ENCODE measurements at regions of chr15 and their contacts with region 1.

Region 1: DNA sequence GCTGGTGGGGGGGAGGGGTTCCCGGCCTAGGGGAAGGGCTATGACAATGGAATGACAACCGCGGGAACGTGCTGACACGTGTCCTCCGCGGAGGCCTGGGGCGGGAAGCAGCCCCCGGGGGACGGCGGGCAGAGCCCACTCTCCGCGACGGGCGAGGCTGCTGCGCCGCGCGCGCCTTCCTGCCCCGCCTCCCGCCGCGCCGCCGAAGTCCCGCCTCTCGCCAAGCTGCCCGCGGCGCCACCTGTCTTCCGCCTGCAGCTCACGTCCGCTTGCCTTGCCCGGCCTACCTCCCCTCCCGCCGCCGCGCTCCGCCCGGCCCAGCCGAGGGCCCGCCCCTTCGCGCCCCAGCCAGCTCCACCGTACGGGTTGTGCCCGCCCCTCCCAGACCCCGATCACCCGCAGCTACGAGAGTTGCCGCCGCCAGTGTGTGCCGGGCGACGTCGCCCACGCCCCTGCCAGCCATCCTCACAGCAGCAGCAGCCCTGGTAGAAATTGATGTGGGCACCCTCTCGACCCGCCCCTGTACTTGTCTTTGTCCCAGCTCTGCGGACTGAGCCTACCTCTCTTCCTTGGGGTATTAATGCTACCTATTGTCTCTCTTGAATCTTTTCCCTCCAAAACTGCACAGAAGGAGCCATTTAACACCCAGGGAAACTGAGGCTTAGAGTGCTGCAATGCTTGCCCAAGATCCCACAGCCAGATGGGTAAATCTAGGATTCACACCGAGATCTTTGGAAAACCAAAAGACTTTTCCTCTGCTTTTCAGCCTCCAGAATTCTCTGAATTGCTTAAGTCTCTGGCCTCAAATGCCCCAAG is at the start of gene PARP16:
- DNase-seq: peak; percentile 81
- H3K4me3 Mint-ChIP-seq: peak within 1 kb of the TSS; percentile 79
- H3K27ac Mint-ChIP-seq: peak within 1 kb of the TSS; percentile 39
- H3K4me1 Mint-ChIP-seq: peaks cover 4% of the 10 kb centered on the region
- H3K27me3 Mint-ChIP-seq: no peaks in the 10 kb centered on the region
- CTCF ChIP-seq: peak; percentile 22
- total RNA-seq, gene PARP16: 5.9 and 6.1 TPM in 2 replicates

Region 2: GRCh38 chr15:64930778-64931371 is 356.0 kb before region 1 on chr15:
- CTCF ChIA-PET with region 1: no interaction called
- POLR2A ChIA-PET with region 1: no interaction called
- intact Hi-C with region 1: no loop called
- DNase-seq: no peak
- H3K4me3 Mint-ChIP-seq: no peak overlapping the region
- H3K27ac Mint-ChIP-seq: no peak overlapping the region
- H3K4me1 Mint-ChIP-seq: peaks cover 6% of the 10 kb centered on the region
- H3K27me3 Mint-ChIP-seq: no peaks in the 10 kb centered on the region
- CTCF ChIP-seq: no peak

Region 3: DNA sequence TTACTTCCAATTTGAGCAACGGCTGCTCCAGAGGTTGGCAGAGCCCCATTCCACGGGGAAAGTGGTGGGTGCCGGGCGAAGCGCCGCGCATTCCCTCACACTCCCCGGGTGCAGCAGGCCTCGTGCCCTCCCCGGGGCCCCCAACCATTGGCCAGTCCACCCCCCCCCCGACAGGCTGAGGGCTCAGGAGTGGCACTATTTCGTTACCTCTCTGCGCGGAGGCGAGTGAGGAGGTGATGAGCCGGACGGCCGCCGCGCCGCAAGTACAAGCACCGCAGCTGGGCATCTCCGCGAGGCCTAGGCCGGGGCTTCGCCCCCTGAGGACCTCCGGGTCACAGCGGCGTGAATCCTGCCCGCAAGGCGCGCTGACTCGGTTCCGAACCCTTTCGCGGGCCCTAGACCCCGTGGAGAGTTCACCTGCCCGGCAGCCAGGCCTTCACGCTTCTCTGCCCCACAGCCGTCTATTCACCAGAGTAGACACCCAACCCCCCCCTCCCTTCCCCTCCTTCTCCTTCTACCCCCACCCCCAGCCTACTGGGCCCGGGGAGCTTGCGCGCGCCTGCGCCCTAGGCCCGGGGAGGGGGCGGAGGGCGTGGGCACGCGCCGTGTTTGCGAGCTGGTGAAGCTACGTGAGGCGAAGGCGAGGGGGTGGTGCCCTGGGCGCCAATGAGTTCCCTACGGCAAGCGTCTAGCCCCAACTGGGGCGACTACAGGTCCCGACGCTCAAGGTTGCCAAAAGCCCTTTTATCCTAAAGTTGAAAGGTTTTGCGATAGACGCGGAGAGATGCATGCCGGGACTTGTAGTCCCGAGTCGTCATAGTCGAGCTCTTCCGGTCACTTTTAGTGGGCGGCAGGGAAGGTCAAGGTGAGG is 101.8 kb before region 1 on chr15 and contains the start of gene CLPX:
- CTCF ChIA-PET with region 1: interaction called, 6 read pairs
- POLR2A ChIA-PET with region 1: interaction called, 83 read pairs
- intact Hi-C with region 1: no loop called
- DNase-seq: peak; percentile 94
- H3K4me3 Mint-ChIP-seq: peak within 1 kb of the TSS; percentile 94
- H3K27ac Mint-ChIP-seq: peak within 1 kb of the TSS; percentile 96
- H3K4me1 Mint-ChIP-seq: peaks cover 6% of the 10 kb centered on the region
- H3K27me3 Mint-ChIP-seq: no peaks in the 10 kb centered on the region
- CTCF ChIP-seq: no peak
- total RNA-seq, gene CLPX: 47.9 and 48.9 TPM in 2 replicates

Region 4: DNA sequence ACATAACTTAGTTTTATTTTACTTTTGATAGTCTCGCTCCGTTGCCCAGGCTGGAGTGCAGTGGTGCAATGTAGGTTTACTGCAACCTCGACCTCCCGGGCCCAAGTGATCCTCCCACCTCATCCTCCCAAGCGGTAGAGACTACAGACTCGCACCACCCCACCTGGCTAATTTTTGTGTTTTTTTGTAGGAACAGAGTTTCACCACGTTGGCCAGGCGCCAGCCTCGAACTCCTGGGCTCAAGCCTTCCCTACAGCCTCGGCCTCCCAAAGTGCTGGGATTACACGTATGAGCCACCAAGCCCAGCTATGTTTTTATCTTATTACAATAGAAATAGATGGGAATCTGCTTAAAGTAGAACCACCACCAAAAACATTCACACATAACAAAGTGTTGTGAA is 11.8 kb after region 1 on chr15:
- CTCF ChIA-PET with region 1: interaction called, 17 read pairs
- POLR2A ChIA-PET with region 1: interaction called, 52 read pairs
- intact Hi-C with region 1: no loop called
- DNase-seq: no peak
- H3K4me3 Mint-ChIP-seq: no peak overlapping the region
- H3K27ac Mint-ChIP-seq: no peak overlapping the region
- H3K4me1 Mint-ChIP-seq: peaks cover 11% of the 10 kb centered on the region
- H3K27me3 Mint-ChIP-seq: no peaks in the 10 kb centered on the region
- CTCF ChIP-seq: no peak

Region 5: GRCh38 chr15:65304389-65305144 is 17.7 kb after region 1 on chr15 and contains the start of gene RNU5B-1:
- CTCF ChIA-PET with region 1: interaction called, 14 read pairs
- POLR2A ChIA-PET with region 1: interaction called, 52 read pairs
- intact Hi-C with region 1: no loop called
- DNase-seq: peak; percentile 91
- H3K4me3 Mint-ChIP-seq: peak within 1 kb of the TSS; percentile 88
- H3K27ac Mint-ChIP-seq: peak within 1 kb of the TSS; percentile 100
- H3K4me1 Mint-ChIP-seq: no peaks in the 10 kb centered on the region
- H3K27me3 Mint-ChIP-seq: no peaks in the 10 kb centered on the region
- CTCF ChIP-seq: peak; percentile 81
- total RNA-seq, gene RNU5B-1: not detected in 2 replicates

Region 6: GRCh38 chr15:65368302-65369211 is 81.6 kb after region 1 on chr15:
- CTCF ChIA-PET with region 1: no interaction called
- POLR2A ChIA-PET with region 1: no interaction called
- intact Hi-C with region 1: no loop called
- DNase-seq: no peak
- H3K4me3 Mint-ChIP-seq: no peak overlapping the region
- H3K27ac Mint-ChIP-seq: no peak overlapping the region
- H3K4me1 Mint-ChIP-seq: no peaks in the 10 kb centered on the region
- H3K27me3 Mint-ChIP-seq: peaks cover 8% of the 10 kb centered on the region
- CTCF ChIP-seq: no peak